GM10248 (cell line): ENCODE measurements at regions of chr6 and their contacts with region 1.

Region 1: DNA sequence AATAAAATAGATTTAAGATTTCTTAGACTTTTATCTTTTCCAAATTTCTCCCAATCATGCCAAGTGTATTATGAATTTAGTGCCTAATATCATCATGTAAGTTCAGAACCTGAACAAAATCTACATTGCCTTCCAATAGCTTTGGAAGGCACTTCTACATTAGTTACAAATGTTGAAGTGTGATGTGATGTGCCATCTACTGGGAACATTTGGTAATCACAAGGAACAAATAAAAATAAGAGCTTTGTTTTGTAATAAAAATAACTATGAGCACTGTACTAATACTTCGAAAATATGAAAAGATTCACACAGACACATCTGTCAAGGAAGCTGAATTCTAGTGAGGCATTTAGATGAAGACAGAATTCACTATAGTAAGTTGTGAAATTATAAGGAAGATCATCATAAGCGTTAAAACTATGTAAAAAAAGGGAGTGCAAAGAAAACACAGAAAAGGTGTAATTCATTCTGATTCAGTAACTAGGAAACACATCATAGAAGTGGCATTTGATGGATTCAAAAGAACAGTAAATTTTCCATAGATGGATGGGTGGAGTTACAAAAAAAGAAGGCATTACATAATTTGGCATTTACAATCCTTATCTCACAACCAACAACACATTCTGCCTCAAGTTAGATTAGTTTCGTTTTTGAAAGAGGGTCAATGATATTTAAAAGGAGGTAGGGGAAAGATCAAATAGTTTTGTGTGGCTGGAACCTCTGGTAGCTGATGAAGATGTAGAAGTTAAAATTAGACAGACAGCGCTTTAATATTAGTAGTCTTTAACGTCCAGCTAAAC is 161.0 kb downstream of the ASCC3 start:
- DNase-seq: no peak
- CTCF ChIP-seq: peak; percentile 40

Region 2: DNA sequence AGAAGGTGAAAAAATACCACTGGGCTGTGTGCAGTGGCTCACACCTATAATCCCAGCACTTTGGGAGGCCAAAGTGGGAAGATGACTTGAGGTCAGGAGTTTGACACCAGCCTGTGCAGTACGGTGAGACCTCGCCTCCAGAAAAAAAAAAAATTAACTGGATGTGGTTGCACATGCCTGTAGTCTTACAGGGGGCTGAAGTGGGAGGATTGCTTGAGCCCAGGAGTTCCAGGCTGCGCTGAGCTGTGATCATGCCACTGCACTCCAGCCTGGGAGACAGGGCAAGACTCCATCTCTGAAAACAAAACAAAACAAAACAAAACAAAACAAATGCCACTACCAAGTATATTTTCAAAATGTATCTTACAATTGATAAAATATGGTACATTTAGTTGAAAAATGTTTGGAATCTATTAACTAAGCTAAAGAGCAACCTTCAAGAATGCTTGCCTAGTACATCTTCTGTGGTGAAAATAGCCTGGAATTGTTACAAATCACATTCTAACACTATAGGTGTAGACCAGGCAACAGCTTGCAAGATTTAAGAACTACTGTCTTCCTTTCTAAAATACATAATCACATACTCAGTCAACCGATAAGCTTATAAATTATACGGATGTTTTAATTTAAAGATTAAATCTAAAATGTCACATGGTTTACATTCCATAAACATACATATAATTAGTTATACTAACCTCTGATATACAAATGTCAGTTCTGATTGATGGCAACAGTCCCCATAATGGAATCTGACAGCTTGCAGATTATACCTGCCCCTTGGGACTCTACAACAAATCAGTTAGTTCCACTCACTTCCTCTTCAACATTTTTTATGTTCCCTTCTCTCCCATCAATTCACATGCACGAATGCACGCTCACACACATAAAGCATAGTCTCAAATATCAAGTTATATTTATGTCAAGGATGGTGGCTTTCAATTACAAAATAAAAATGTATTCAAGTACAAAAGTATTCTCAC is 10.2 kb after region 1 on chr6:
- CTCF ChIA-PET with region 1: interaction called, 13 read pairs
- POLR2A ChIA-PET with region 1: no interaction called
- DNase-seq: no peak
- CTCF ChIP-seq: no peak